Activated CD8-positive, alpha-beta T cell treated with anti-CD3 and anti-CD28 coated beads, Interleukin-2, amount 10 ng/mL, durations not matched to agents 7 days and 5 days (primary cell): ENCODE measurements at regions of chr2 and their contacts with region 1.

Region 1: DNA sequence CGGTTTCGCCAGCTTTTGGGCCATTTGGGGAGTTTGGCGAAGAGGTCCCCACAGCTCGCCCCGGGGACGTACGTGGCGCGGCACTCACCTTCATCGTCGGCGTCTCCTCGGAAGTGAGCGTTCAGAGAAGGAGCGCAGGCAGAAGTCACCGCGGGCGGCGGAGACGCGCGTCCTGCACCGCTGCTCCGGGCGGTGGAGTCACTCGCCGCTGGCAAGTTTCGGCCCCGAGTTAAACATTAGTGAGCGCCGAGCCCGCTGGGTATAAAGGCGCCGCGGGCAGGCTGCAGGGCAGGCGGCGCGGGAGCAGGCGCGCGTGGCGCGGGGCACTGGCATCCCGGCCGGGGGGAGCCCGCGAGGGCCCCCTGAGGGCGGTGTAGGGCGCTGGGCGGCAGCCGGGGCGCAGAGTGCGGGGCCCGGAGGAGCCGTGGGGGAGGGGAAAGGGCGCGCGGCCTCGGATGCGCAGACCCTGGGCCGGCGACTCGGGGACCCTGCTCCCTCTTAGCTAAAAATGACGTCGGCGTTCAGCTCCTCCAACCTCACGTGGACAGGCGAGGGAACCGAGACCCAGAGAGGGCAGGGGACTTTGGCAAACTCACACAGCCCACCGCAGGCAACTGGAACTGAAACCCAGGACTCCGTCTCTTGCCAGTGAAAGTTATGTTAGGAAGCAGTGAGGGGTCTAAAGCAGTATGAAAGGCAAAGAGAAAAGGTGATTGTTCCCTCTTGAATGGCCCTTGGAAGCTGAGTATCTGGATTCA is at the start of gene DPP4:
- DNase-seq: peak; percentile 66
- ATAC-seq: peak; percentile 83
- H3K4me3 Mint-ChIP-seq: peak within 1 kb of the TSS; percentile 95
- H3K27ac Mint-ChIP-seq: peak within 1 kb of the TSS; percentile 93
- H3K4me1 Mint-ChIP-seq: peaks cover 44% of the 10 kb centered on the region
- H3K27me3 Mint-ChIP-seq: no peaks in the 10 kb centered on the region
- total RNA-seq, gene DPP4: 158 TPM

Region 2: GRCh38 chr2:161946489-161947107 is 127.5 kb before region 1 on chr2:
- CTCF ChIA-PET with region 1: interaction called, 15 read pairs
- POLR2A ChIA-PET with region 1: no interaction called
- DNase-seq: peak; percentile 51
- ATAC-seq: peak; percentile 61
- H3K4me3 Mint-ChIP-seq: no peak overlapping the region
- H3K27ac Mint-ChIP-seq: no peak overlapping the region
- H3K4me1 Mint-ChIP-seq: peaks cover 36% of the 10 kb centered on the region
- H3K27me3 Mint-ChIP-seq: peaks cover 4% of the 10 kb centered on the region

Region 3: GRCh38 chr2:161992526-161992925 is 81.5 kb before region 1 on chr2:
- CTCF ChIA-PET with region 1: interaction called, 6 read pairs
- POLR2A ChIA-PET with region 1: interaction called, 27 read pairs
- DNase-seq: peak; percentile 81
- ATAC-seq: peak; percentile 89
- H3K4me3 Mint-ChIP-seq: peak overlapping the region; percentile 77
- H3K27ac Mint-ChIP-seq: peak overlapping the region; percentile 96
- H3K4me1 Mint-ChIP-seq: peaks cover 83% of the 10 kb centered on the region
- H3K27me3 Mint-ChIP-seq: no peaks in the 10 kb centered on the region

Region 4: GRCh38 chr2:162013514-162014475 is 60.3 kb before region 1 on chr2:
- CTCF ChIA-PET with region 1: no interaction called
- POLR2A ChIA-PET with region 1: interaction called, 16 read pairs
- DNase-seq: no peak
- ATAC-seq: no peak
- H3K4me3 Mint-ChIP-seq: peak overlapping the region; percentile 39
- H3K27ac Mint-ChIP-seq: peak overlapping the region; percentile 93
- H3K4me1 Mint-ChIP-seq: peaks cover 79% of the 10 kb centered on the region
- H3K27me3 Mint-ChIP-seq: no peaks in the 10 kb centered on the region

Region 5: GRCh38 chr2:162058973-162059668 is 14.9 kb before region 1 on chr2:
- CTCF ChIA-PET with region 1: interaction called, 50 read pairs
- POLR2A ChIA-PET with region 1: interaction called, 62 read pairs
- DNase-seq: no peak
- ATAC-seq: peak; percentile 62
- H3K4me3 Mint-ChIP-seq: peak overlapping the region; percentile 66
- H3K27ac Mint-ChIP-seq: peak overlapping the region; percentile 84
- H3K4me1 Mint-ChIP-seq: peaks cover 87% of the 10 kb centered on the region
- H3K27me3 Mint-ChIP-seq: no peaks in the 10 kb centered on the region

Region 6: GRCh38 chr2:162123806-162124758 is 50.0 kb after region 1 on chr2:
- CTCF ChIA-PET with region 1: interaction called, 13 read pairs
- POLR2A ChIA-PET with region 1: interaction called, 4 read pairs
- DNase-seq: no peak
- ATAC-seq: peak; percentile 68
- H3K4me3 Mint-ChIP-seq: no peak overlapping the region
- H3K27ac Mint-ChIP-seq: no peak overlapping the region
- H3K4me1 Mint-ChIP-seq: peaks cover 26% of the 10 kb centered on the region
- H3K27me3 Mint-ChIP-seq: peaks cover 4% of the 10 kb centered on the region